RWPE1 (cell line): ENCODE measurements at regions of chr13 and their contacts with region 1.

Region 1: GRCh38 chr13:27283906-27284493 is 13.4 kb downstream of the RASL11A start:
- DNase-seq: peak; percentile 13
- H3K27ac ChIP-seq: no peak overlapping the region
- CTCF ChIP-seq: no peak

Region 2: GRCh38 chr13:26946684-26947343 is 337.2 kb before region 1 on chr13:
- CTCF ChIA-PET with region 1: interaction called, 15 read pairs
- POLR2A ChIA-PET with region 1: no interaction called
- DNase-seq: peak; percentile 49
- H3K27ac ChIP-seq: no peak overlapping the region
- CTCF ChIP-seq: peak; percentile 74